Natural killer cell (primary cell): ENCODE measurements at regions of chr7 and their contacts with region 1.

Region 1: GRCh38 chr7:87219545-87220025 is at the start of gene TMEM243:
- DNase-seq: peak; percentile 74 to 92
- ATAC-seq: peak; percentile 76 to 91 (median 79)
- H3K4me3 ChIP-seq: peak within 1 kb of the TSS; percentile 98
- H3K4me3 Mint-ChIP-seq: peak within 1 kb of the TSS; percentile 99
- H3K27ac ChIP-seq: peak within 1 kb of the TSS; percentile 94
- H3K27ac Mint-ChIP-seq: peak within 1 kb of the TSS; percentile 95 to 98
- H3K4me1 ChIP-seq: peaks cover 39% of the 10 kb centered on the region
- H3K4me1 Mint-ChIP-seq: peaks cover 43% of the 10 kb centered on the region in 2 donors
- H3K27me3 ChIP-seq: no peaks in the 10 kb centered on the region
- H3K27me3 Mint-ChIP-seq: no peaks in the 10 kb centered on the region
- CTCF ChIP-seq: peak; percentile 19
- total RNA-seq, gene TMEM243: 52.5 to 61.8 (median 55.2) TPM

Region 2: DNA sequence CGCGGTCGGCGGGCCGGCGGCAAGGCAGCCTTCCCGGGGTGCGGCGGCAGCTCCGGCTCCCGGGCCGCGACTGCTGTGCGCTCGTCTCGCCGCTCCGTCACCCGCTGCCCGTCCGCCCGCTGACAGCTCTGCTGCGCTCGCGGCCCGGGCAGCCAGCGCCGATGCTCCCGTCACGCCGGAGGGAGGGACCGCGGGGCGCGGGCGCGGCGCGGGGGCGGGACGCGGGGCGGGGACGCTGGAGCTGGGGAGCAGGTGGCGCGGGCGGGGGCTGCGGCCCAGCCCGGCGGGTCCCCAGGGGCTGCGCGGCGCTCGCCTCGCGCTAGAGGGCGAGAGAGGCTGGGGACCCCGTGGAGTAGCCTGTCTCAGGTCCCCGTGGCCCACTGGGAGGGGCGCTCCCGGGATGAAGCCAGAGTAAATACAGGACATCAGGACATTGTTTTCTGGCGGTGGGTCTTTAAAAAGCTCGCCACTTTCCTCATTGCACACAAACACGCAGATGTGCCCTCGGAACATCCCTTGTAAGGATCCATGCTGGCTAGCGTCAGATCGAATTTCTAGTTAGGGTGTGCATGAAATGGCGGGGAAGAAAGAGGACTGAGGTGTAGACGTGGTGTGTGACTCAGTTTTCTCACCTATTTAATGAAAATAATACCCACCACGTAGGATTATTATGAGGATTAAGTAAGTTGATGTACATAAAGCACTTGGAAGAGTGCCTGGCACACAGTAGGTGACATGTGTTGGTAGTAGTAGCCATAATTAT is 159.9 kb before region 1 on chr7 and contains the start of gene ELAPOR2:
- intact Hi-C with region 1: loop called (anchors 10 kb)
- DNase-seq: peak; percentile 68 to 87
- ATAC-seq: peak; percentile 90 to 93 (median 92)
- H3K4me3 ChIP-seq: peak within 1 kb of the TSS; percentile 52
- H3K4me3 Mint-ChIP-seq: peak within 1 kb of the TSS; percentile 83
- H3K27ac ChIP-seq: peak within 1 kb of the TSS; percentile 20
- H3K27ac Mint-ChIP-seq: peak within 1 kb of the TSS in 1 of 2 donors; percentile 42
- H3K4me1 ChIP-seq: peaks cover 11% of the 10 kb centered on the region
- H3K4me1 Mint-ChIP-seq: peaks cover 13 to 20% of the 10 kb centered on the region in 2 donors
- H3K27me3 ChIP-seq: peaks cover 9% of the 10 kb centered on the region
- H3K27me3 Mint-ChIP-seq: peaks cover 10 to 13% of the 10 kb centered on the region in 2 donors
- CTCF ChIP-seq: peak; percentile 14
- total RNA-seq, gene ELAPOR2: 4.2 to 8.6 (median 6.2) TPM

Region 3: GRCh38 chr7:87075671-87076404 is 143.7 kb before region 1 on chr7:
- intact Hi-C with region 1: no loop called
- DNase-seq: peak in 1 of 2 donors; percentile 34
- ATAC-seq: no peak
- H3K4me3 ChIP-seq: no peak overlapping the region
- H3K4me3 Mint-ChIP-seq: no peak overlapping the region
- H3K27ac ChIP-seq: no peak overlapping the region
- H3K27ac Mint-ChIP-seq: no peak overlapping the region
- H3K4me1 ChIP-seq: no peaks in the 10 kb centered on the region
- H3K4me1 Mint-ChIP-seq: no peaks in the 10 kb centered on the region
- H3K27me3 ChIP-seq: peaks cover 2% of the 10 kb centered on the region
- H3K27me3 Mint-ChIP-seq: peaks cover 19 to 35% of the 10 kb centered on the region in 2 donors
- CTCF ChIP-seq: no peak

Region 4: DNA sequence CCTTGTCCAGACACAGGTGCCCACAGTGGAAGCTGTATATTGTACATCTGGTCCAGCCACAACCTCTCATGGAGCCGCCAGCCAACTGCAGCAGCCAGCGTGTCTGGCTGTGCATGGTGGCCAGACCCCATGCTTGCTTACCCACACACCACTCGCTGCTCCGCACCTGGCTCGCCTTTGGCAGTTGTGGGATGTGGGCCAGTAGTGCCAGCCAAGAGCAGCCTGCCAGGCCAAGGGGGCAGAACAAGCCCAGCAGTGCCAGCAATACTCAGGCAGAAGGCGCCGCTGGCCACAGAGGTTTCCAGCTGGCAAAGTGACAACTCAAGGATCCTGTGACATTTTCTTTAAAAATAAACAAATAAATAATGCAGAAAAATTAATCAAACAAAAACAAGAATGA is 11.7 kb after region 1 on chr7:
- intact Hi-C with region 1: loop called (anchors 2 kb)
- DNase-seq: no peak
- ATAC-seq: no peak
- H3K4me3 ChIP-seq: no peak overlapping the region
- H3K4me3 Mint-ChIP-seq: no peak overlapping the region
- H3K27ac ChIP-seq: no peak overlapping the region
- H3K27ac Mint-ChIP-seq: no peak overlapping the region
- H3K4me1 ChIP-seq: no peaks in the 10 kb centered on the region
- H3K4me1 Mint-ChIP-seq: no peaks in the 10 kb centered on the region
- H3K27me3 ChIP-seq: peaks cover 3% of the 10 kb centered on the region
- H3K27me3 Mint-ChIP-seq: peaks cover 4 to 11% of the 10 kb centered on the region in 2 donors
- CTCF ChIP-seq: no peak

Region 5: GRCh38 chr7:87345166-87345927 is 125.8 kb after region 1 on chr7 and contains the start of gene CROT:
- intact Hi-C with region 1: loop called (anchors 2 kb)
- DNase-seq: peak; percentile 93 to 95
- ATAC-seq: peak; percentile 96 to 99 (median 98)
- H3K4me3 ChIP-seq: peak within 1 kb of the TSS; percentile 95
- H3K4me3 Mint-ChIP-seq: peak within 1 kb of the TSS; percentile 92
- H3K27ac ChIP-seq: peak within 1 kb of the TSS; percentile 86
- H3K27ac Mint-ChIP-seq: peak within 1 kb of the TSS; percentile 91 to 96
- H3K4me1 ChIP-seq: peaks cover 8% of the 10 kb centered on the region
- H3K4me1 Mint-ChIP-seq: peaks cover 48 to 49% of the 10 kb centered on the region in 2 donors
- H3K27me3 ChIP-seq: no peaks in the 10 kb centered on the region
- H3K27me3 Mint-ChIP-seq: no peaks in the 10 kb centered on the region
- CTCF ChIP-seq: no peak
- total RNA-seq, gene CROT: 17.5 to 19.0 (median 17.9) TPM